A549 (cell line): ENCODE measurements at regions of chr4 and their contacts with region 1.

Region 1: GRCh38 chr4:40976343-40976742 is 226.6 kb downstream of the NSUN7 start:
- DNase-seq: peak; percentile 14 to 59
- ATAC-seq: peak in 1 of 2 experiments; percentile 63; a peak in 1 of 6 replicates
- H3K4me3 ChIP-seq: no peak overlapping the region
- H3K27ac ChIP-seq: peak overlapping the region in 1 of 2 experiments; percentile 64; a peak in 3 of 6 replicates
- H3K4me1 ChIP-seq: peaks cover 4% of the 10 kb centered on the region; the same call in 2 of the 3 replicates
- CTCF ChIP-seq: peak; percentile 73
- EP300 ChIP-seq: no peak
- POLR2A ChIP-seq: no peak
- RAD21 ChIP-seq: peak; percentile 63 to 70

Region 2: DNA sequence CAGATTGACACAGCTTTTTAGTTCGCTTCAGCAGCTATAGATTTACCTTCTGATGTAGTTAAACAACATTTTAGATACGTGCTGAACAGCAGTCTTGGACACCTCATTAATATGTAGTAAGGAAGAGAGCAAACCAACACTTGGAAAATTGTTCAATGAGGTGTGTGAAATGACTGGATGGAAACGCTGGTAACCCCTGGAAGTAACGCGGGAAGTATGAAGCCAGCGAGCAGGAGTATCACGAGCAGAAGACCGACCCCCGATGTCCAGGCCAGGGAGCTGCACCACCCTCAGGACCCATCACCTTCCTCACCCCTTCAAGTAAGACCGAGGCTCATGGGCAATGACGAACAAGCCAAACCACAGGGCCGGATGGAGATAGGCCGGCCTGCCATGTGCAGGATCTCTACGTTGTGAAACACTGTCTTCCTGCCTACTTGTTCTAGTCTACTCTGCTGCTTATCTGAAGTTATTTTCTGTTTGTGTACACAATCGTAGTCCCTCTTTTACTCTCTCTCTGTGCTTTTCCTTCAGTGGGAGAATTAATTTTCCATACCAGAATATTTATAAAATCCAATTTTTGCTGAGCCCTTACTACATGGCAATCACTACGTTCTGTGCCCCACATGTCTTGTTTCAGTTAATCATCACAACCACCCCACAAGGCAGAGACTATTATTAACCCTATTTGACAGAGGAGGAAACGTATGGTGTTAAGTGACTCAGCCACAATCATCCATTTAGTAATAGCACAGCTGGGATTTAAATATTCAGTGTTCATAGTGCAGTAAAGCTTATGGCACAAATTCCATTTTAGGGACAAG is 16.3 kb after region 1 on chr4:
- CTCF ChIA-PET with region 1: interaction called, 15 read pairs
- POLR2A ChIA-PET with region 1: no interaction called
- DNase-seq: peak in 1 of 2 experiments; percentile 34
- ATAC-seq: no peak
- H3K4me3 ChIP-seq: no peak overlapping the region
- H3K27ac ChIP-seq: peak overlapping the region; percentile 78 to 89
- H3K4me1 ChIP-seq: peaks cover 68% of the 10 kb centered on the region
- CTCF ChIP-seq: no peak
- EP300 ChIP-seq: no peak
- POLR2A ChIP-seq: no peak
- RAD21 ChIP-seq: no peak

Region 3: DNA sequence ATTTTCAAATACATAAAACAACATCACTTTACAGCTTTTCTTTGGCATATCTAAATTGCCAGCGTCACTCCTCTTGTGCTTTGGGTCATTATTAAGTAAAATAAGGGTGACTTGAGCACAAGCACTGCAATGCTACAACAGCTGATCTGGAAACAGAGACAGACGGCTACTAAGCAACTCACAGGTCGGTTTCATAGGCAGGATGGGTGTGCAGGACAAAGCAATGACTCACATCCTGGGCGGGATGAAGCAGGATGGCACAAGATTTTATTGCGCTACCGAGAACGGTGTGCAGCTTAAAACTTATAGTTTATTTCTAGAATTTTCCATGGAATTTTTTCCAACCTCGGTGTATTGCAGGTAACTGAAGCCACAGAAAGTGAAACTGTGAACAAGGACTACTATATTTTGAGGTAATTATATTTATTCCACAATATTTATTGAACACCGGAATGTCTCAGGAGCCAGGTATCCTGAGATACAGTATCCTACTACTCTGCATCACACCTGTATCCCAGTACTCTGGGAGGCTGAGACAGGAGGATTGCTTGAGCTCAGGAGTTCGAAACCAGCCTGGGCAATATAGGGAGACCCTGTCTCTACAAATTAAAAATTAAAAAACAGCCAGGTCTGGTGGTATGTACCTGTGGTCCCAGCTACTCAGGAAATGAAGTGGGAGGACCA is 22.5 kb after region 1 on chr4:
- CTCF ChIA-PET with region 1: interaction called, 11 read pairs
- POLR2A ChIA-PET with region 1: interaction called, 3 read pairs
- DNase-seq: peak; percentile 57 to 82
- ATAC-seq: peak; percentile 94 to 96
- H3K4me3 ChIP-seq: peak overlapping the region; percentile 32; the same call in 2 of the 3 replicates
- H3K27ac ChIP-seq: peak overlapping the region; percentile 73 to 89
- H3K4me1 ChIP-seq: peaks cover 36% of the 10 kb centered on the region
- CTCF ChIP-seq: no peak
- EP300 ChIP-seq: no peak
- POLR2A ChIP-seq: no peak
- RAD21 ChIP-seq: no peak

Region 4: GRCh38 chr4:41204400-41204978 is 228.1 kb after region 1 on chr4:
- CTCF ChIA-PET with region 1: interaction called, 16 read pairs
- POLR2A ChIA-PET with region 1: no interaction called
- DNase-seq: peak in 1 of 2 experiments; percentile 9
- ATAC-seq: peak in 1 of 2 experiments; percentile 72; a peak in 3 of 6 replicates
- H3K4me3 ChIP-seq: no peak overlapping the region
- H3K27ac ChIP-seq: peak overlapping the region in 1 of 2 experiments; percentile 50; a peak in 1 of 6 replicates
- H3K4me1 ChIP-seq: peaks cover 23% of the 10 kb centered on the region
- CTCF ChIP-seq: no peak
- EP300 ChIP-seq: no peak
- POLR2A ChIP-seq: no peak
- RAD21 ChIP-seq: no peak